ENCODE measurements at regions of chr20 and their contacts with region 1.

Region 1: GRCh38 chr20:3767427-3768341 is at the start of gene ADISSP:
- DNase-seq: peak; percentile 92 to 98 (median 94)
- ATAC-seq: peak; percentile 93
- H3K4me3 ChIP-seq: peak within 1 kb of the TSS; percentile 96
- H3K4me3 Mint-ChIP-seq: peak within 1 kb of the TSS; percentile 78 to 94 (median 90)
- H3K27ac ChIP-seq: peak within 1 kb of the TSS; percentile 100
- H3K27ac Mint-ChIP-seq: peak within 1 kb of the TSS; percentile 89 to 98 (median 94)
- H3K4me1 ChIP-seq: peaks cover 6 to 13% of the 10 kb centered on the region in 2 donors
- H3K4me1 Mint-ChIP-seq: peaks cover 11 to 29% (median 21%) of the 10 kb centered on the region in 7 donors
- H3K27me3 ChIP-seq: no peaks in the 10 kb centered on the region
- H3K27me3 Mint-ChIP-seq: peaks cover 0 to 6% (median 0%) of the 10 kb centered on the region in 5 donors
- total RNA-seq, gene ADISSP: 14.0 to 27.4 (median 18.4) TPM

Region 2: GRCh38 chr20:3716195-3716834 is 51.4 kb before region 1 on chr20:
- CTCF ChIA-PET with region 1: no interaction called
- POLR2A ChIA-PET with region 1: interaction called, 3 read pairs
- intact Hi-C with region 1: loop called in 1 of 2 experiments (anchors 1 kb)
- DNase-seq: peak in 3 of 9 donors; percentile 9 to 17 (median 12)
- ATAC-seq: peak; percentile 41
- H3K4me3 ChIP-seq: no peak overlapping the region
- H3K4me3 Mint-ChIP-seq: no peak overlapping the region
- H3K27ac ChIP-seq: no peak overlapping the region
- H3K27ac Mint-ChIP-seq: no peak overlapping the region
- H3K4me1 ChIP-seq: no peaks in the 10 kb centered on the region
- H3K4me1 Mint-ChIP-seq: peaks cover 0 to 14% (median 0%) of the 10 kb centered on the region in 7 donors
- H3K27me3 ChIP-seq: no peaks in the 10 kb centered on the region
- H3K27me3 Mint-ChIP-seq: peaks cover 12 to 28% (median 19%) of the 10 kb centered on the region in 5 donors

Region 3: GRCh38 chr20:3786665-3787323 is 19.1 kb after region 1 on chr20 and contains the start of gene CENPB:
- CTCF ChIA-PET with region 1: interaction called, 7 read pairs
- POLR2A ChIA-PET with region 1: interaction called, 18 read pairs
- intact Hi-C with region 1: loop called (anchors 1 kb)
- DNase-seq: peak; percentile 74 to 98 (median 88)
- ATAC-seq: peak; percentile 96
- H3K4me3 ChIP-seq: peak within 1 kb of the TSS; percentile 29
- H3K4me3 Mint-ChIP-seq: peak within 1 kb of the TSS; percentile 76 to 87 (median 83)
- H3K27ac ChIP-seq: peak within 1 kb of the TSS; percentile 62
- H3K27ac Mint-ChIP-seq: peak within 1 kb of the TSS; percentile 51 to 90 (median 76)
- H3K4me1 ChIP-seq: peaks cover 7 to 9% of the 10 kb centered on the region in 2 donors
- H3K4me1 Mint-ChIP-seq: peaks cover 30 to 45% (median 41%) of the 10 kb centered on the region in 7 donors
- H3K27me3 ChIP-seq: no peaks in the 10 kb centered on the region
- H3K27me3 Mint-ChIP-seq: peaks cover 0 to 12% (median 0%) of the 10 kb centered on the region in 5 donors
- total RNA-seq, gene CENPB: 35.3 to 73.6 (median 50.0) TPM

Region 4: DNA sequence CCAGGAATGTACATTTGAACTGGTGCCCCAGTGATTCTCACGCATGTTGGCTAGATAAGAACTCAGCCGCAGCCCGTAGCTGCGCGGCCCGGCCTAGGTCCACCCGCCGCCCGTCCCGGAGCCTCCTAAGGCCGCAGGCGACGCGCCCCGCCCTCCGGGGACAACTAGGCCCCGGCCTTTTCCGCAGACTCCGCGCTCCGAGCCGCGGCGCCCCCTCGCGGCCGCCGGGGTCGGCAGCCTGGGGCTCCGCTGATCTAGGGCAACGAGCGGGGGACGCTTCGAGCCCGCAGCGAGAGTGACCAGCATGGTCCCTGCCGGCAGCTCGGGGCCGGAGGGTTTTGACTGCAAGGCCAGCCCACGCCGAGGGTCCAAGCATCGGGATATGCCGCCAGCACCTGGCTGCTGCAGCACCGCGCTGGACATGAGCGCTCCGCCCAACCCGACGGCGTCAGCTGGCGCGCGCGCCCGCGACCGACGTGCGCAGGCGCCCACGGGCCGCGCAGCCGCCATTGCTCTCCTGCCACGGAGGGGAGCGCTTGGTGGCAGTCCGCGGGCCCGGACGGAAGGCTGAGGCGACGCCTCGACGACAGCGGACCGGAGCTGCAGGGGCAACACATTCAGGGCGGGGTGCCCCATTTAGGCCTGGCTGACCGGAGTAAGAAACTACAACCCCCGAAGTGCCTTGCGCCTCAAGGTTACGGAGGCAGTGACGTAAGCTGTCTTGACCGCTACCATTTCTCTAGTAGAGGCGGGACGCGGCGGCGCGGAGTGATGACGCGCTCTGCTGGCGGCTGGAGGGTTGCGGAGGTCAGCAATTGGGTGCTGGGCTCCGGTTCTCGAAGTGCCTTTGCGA is 52.6 kb after region 1 on chr20 and contains the start of gene AP5S1:
- CTCF ChIA-PET with region 1: no interaction called
- POLR2A ChIA-PET with region 1: interaction called, 43 read pairs
- intact Hi-C with region 1: loop called (anchors 1 kb)
- DNase-seq: peak; percentile 87 to 96 (median 92)
- ATAC-seq: peak; percentile 92
- H3K4me3 ChIP-seq: peak within 1 kb of the TSS; percentile 90
- H3K4me3 Mint-ChIP-seq: peak within 1 kb of the TSS; percentile 85 to 95 (median 92)
- H3K27ac ChIP-seq: peak within 1 kb of the TSS; percentile 98
- H3K27ac Mint-ChIP-seq: peak within 1 kb of the TSS; percentile 94 to 99 (median 97)
- H3K4me1 ChIP-seq: peaks cover 35 to 41% of the 10 kb centered on the region in 2 donors
- H3K4me1 Mint-ChIP-seq: peaks cover 19 to 54% (median 47%) of the 10 kb centered on the region in 7 donors
- H3K27me3 ChIP-seq: no peaks in the 10 kb centered on the region
- H3K27me3 Mint-ChIP-seq: no peaks in the 10 kb centered on the region
- total RNA-seq, gene AP5S1: 7.9 to 14.0 (median 10.8) TPM

Region 5: DNA sequence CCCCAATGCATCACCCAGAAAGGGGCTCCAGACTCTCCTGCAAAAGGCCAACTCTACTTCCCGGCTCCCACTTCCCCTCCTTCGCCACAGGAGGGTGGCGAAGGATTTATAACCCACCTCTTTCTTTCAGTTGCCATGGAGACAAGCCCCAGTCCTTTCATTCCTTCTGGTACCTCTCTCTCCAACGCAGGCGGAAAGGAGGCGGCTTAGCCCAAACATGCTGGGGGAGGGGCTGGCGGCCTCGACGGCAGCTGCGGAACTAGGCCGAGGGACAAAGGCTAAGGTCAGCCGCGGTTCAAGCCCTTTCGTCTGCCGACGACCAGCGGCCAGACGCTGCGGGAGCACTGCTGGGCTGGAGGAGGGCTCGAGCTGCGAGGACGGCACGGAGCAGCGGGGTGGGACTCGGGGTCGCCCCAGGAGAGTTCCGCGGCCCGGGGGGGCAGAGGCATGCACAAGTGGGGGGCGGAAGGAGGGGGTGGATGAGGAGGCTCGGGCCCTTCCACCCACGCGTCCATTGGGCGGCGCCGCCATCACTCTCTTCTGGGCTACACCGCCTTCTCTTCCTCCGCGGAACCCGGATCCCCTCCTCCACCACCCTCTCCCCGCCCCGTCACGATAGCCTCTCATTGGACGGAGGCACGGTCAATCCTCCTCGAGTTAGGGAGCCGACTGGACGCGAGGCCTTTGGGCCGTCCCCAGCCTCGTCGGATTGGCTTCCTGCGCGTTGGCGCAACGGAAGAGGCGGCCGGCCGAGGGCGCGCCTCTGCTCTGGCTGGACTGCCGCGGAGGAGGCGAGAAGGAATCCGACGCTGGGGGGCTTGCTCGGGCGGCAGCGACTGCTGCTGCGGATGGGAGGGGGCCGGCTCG is 121.2 kb after region 1 on chr20 and contains the start of gene PANK2:
- CTCF ChIA-PET with region 1: no interaction called
- POLR2A ChIA-PET with region 1: no interaction called
- intact Hi-C with region 1: loop called (anchors 1 kb)
- DNase-seq: peak; percentile 85 to 96 (median 94)
- ATAC-seq: peak; percentile 98
- H3K4me3 ChIP-seq: peak within 1 kb of the TSS; percentile 82
- H3K4me3 Mint-ChIP-seq: peak within 1 kb of the TSS; percentile 96 to 100 (median 98)
- H3K27ac ChIP-seq: peak within 1 kb of the TSS; percentile 91
- H3K27ac Mint-ChIP-seq: peak within 1 kb of the TSS; percentile 87 to 99 (median 97)
- H3K4me1 ChIP-seq: peaks cover 10 to 25% of the 10 kb centered on the region in 2 donors
- H3K4me1 Mint-ChIP-seq: peaks cover 42 to 64% (median 55%) of the 10 kb centered on the region in 7 donors
- H3K27me3 ChIP-seq: no peaks in the 10 kb centered on the region
- H3K27me3 Mint-ChIP-seq: no peaks in the 10 kb centered on the region
- total RNA-seq, gene PANK2: 42.4 to 69.7 (median 59.1) TPM

Region 6: DNA sequence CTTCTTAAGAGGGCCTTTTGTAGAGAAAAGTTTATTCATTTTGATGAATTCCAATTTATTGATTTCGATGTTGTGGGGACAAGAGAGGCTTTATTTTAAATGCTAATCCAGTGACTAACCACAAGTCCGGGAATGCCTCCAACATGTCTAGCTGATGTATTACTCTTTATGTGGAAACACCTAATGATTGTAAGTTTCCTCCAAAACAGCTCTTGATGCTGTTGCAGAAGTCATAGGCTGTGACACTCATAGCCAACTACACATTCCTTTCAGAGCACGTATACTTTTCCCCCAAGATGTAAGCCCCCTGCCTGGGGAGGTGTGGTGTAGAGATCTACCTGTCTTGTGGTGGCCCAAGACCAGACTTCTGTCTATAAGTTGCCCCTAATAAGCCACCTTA is 309.0 kb after region 1 on chr20:
- CTCF ChIA-PET with region 1: no interaction called
- POLR2A ChIA-PET with region 1: no interaction called
- intact Hi-C with region 1: no loop called
- DNase-seq: no peak
- ATAC-seq: no peak
- H3K4me3 ChIP-seq: no peak overlapping the region
- H3K4me3 Mint-ChIP-seq: no peak overlapping the region
- H3K27ac ChIP-seq: no peak overlapping the region
- H3K27ac Mint-ChIP-seq: peak overlapping the region in 1 of 9 donors; percentile 39
- H3K4me1 ChIP-seq: no peaks in the 10 kb centered on the region
- H3K4me1 Mint-ChIP-seq: peaks cover 11 to 43% (median 17%) of the 10 kb centered on the region in 7 donors
- H3K27me3 ChIP-seq: no peaks in the 10 kb centered on the region
- H3K27me3 Mint-ChIP-seq: peaks cover 0 to 17% (median 0%) of the 10 kb centered on the region in 5 donors

Region 7: GRCh38 chr20:4898282-4899244 is 1130.9 kb after region 1 on chr20:
- CTCF ChIA-PET with region 1: no interaction called
- POLR2A ChIA-PET with region 1: no interaction called
- intact Hi-C with region 1: no loop called
- DNase-seq: no peak
- ATAC-seq: no peak
- H3K4me3 ChIP-seq: no peak overlapping the region
- H3K4me3 Mint-ChIP-seq: no peak overlapping the region
- H3K27ac ChIP-seq: no peak overlapping the region
- H3K27ac Mint-ChIP-seq: peak overlapping the region in 6 of 9 donors; percentile 5 to 57 (median 26)
- H3K4me1 ChIP-seq: no peaks in the 10 kb centered on the region
- H3K4me1 Mint-ChIP-seq: peaks cover 0 to 20% (median 12%) of the 10 kb centered on the region in 7 donors
- H3K27me3 ChIP-seq: no peaks in the 10 kb centered on the region
- H3K27me3 Mint-ChIP-seq: no peaks in the 10 kb centered on the region

Region 8: DNA sequence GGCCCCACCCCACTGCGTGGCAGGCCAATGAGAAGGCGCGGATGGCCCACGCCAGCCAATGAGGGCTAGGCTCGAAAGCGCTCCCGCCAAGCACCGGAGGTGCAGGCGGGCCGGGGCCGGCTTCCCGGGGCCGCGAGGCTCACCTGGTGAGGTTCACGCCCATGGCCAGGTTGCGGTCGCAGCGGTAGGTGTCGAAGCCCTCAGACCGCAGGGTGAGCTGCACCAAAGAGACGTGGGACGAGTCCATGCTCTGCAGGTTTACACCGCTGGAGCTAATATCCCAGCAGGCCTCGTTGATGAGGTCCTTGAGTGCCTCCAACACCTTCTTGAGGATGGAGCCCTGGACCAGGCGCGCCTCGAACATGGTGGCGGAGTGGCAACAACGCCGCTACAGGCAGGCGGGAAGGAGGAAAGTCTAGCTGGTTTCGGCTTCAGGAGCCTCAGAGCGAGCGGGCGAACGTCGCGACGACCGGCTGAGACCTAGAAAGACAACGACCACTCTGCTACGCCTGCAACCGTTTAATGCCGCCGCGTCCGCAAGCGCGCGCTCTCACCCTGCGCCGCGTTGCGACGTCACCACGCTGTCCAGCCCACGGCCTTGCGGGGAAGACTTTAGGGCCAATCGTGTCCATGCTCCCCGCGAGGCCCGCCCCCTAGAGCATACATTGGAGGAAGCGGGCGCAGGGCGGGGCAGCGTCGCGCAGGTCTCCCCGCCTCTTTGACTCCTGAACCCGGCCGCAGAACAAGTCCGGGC is 1351.9 kb after region 1 on chr20 and contains the start of gene PCNA:
- CTCF ChIA-PET with region 1: no interaction called
- POLR2A ChIA-PET with region 1: no interaction called
- intact Hi-C with region 1: loop called (anchors 5 to 10 kb)
- DNase-seq: peak; percentile 85 to 96 (median 94)
- ATAC-seq: peak; percentile 97
- H3K4me3 ChIP-seq: peak within 1 kb of the TSS; percentile 98
- H3K4me3 Mint-ChIP-seq: peak within 1 kb of the TSS; percentile 87 to 99 (median 96)
- H3K27ac ChIP-seq: peak within 1 kb of the TSS; percentile 73
- H3K27ac Mint-ChIP-seq: peak within 1 kb of the TSS; percentile 82 to 99 (median 96)
- H3K4me1 ChIP-seq: peaks cover 9 to 22% of the 10 kb centered on the region in 2 donors
- H3K4me1 Mint-ChIP-seq: peaks cover 19 to 66% (median 32%) of the 10 kb centered on the region in 7 donors
- H3K27me3 ChIP-seq: no peaks in the 10 kb centered on the region
- H3K27me3 Mint-ChIP-seq: peaks cover 0 to 2% (median 0%) of the 10 kb centered on the region in 5 donors
- total RNA-seq, gene PCNA: 21.6 to 392 (median 39.3) TPM